B cell (primary cell): ENCODE measurements at regions of chr7 and their contacts with region 1.

Region 1: DNA sequence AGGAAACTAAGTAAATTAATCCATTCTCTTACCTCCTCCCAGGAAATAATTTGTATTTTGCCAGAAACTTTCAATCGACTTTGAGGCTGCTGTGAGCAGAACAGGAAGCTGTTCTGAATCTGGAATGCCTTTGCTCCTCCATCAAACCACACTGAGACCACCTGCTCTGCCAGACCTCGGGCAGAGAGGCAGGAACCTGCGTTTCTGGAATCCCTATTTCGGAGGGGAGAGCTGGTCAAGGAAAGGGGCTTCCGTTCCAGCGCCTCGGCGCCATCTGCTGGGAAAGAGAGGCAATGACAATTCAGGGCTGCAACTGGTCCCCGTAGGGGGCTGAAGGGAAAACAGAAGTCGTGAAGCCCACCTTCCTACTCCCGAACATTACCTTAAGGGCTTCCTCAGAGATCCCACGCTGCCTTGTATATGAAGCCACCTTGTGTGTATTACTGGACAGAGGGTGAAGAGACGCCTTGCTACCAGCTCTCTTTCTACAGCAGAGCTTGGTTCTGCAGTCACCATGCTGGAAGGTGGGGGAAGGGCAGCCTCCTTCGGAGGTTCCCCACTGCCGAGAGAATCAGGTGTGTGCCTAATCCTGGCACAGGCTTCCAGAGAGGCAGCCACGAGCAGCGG is 31.2 kb downstream of the ZNF467 start:
- DNase-seq: peak; percentile 77
- ATAC-seq: peak; percentile 80
- H3K4me3 ChIP-seq: peak overlapping the region; percentile 21 to 57 (median 44)
- H3K4me3 Mint-ChIP-seq: peak overlapping the region; percentile 89
- H3K27ac ChIP-seq: no peak overlapping the region
- H3K27ac Mint-ChIP-seq: no peak overlapping the region
- H3K4me1 ChIP-seq: peaks cover 9 to 11% of the 10 kb centered on the region in 2 donors
- H3K4me1 Mint-ChIP-seq: peaks cover 10% of the 10 kb centered on the region
- H3K27me3 ChIP-seq: peaks cover 0 to 24% (median 0%) of the 10 kb centered on the region in 4 experiments
- H3K27me3 Mint-ChIP-seq: peaks cover 37% of the 10 kb centered on the region
- CTCF ChIP-seq: peak; percentile 89

Region 2: DNA sequence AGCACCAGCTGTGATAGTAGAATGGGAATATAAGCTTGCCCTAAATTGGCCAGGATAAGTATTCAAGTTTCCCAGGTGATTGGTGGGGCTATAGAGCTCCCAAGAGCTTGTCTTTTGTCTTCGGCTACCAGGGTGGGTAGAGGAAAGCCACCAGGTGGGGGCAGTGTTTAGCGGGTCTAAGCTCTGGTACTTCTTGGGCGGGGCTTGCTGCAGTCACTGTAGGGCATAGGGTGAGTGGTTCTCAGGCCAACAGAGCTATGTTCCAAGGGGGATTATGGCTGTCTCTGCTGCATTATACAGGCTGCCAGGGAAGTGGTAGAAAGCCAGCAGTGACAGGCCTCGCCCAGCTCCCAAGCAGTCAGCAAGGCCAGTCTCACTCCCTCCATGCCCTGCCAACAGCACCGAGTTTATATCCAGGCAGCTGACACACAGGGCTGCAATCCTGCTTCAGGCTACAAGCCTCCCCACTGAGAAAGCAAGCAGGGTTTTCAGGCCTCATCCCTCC is 79.5 kb before region 1 on chr7:
- CTCF ChIA-PET with region 1: interaction called, 38 read pairs
- POLR2A ChIA-PET with region 1: no interaction called
- intact Hi-C with region 1: no loop called
- DNase-seq: peak; percentile 49
- ATAC-seq: peak; percentile 62
- H3K4me3 ChIP-seq: no peak overlapping the region
- H3K4me3 Mint-ChIP-seq: no peak overlapping the region
- H3K27ac ChIP-seq: no peak overlapping the region
- H3K27ac Mint-ChIP-seq: no peak overlapping the region
- H3K4me1 ChIP-seq: no peaks in the 10 kb centered on the region
- H3K4me1 Mint-ChIP-seq: no peaks in the 10 kb centered on the region
- H3K27me3 ChIP-seq: peaks cover 0 to 13% (median 0%) of the 10 kb centered on the region in 4 experiments
- H3K27me3 Mint-ChIP-seq: peaks cover 69% of the 10 kb centered on the region
- CTCF ChIP-seq: peak; percentile 47

Region 3: DNA sequence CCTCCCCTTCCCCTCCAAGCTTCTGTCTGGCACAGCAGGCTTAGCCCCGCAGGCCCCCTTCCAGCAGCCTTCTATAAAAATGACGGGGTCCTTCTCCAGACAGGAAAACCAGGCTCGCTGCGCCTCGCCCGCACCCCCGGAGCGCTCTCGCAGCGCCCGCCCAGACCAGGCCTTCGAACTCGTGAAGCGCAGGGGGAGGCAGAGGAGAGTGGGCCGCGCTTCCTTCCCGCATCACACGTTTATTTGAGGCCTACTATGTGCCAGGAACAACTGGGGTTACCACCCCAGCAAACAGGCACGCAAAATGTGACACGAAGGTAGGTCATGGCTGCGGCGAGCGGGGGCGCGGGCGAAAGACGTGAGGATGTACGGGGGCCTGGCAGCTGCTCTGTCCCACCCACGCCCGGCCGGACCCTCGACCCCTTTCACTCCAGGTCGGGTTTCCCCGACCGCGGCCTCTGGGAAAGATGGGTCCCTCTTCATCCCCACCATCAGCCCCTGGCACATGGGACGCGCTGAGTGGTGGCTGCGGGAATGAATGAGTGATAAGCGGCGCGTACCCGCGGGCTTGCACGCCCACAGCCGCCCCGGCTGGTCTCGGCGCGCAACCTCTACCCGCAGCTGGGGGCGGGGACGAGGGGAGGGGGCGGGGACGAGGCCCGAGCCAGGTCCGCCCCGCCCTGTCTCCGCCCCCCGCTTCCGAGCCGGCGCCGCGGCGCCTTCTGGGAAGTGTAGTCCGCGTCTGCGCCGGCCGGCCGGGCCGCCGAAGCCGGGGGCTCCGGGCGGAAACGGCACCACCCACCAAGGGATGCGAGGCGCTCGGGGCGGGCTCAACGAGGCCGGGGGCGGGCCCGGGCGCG is 27.9 kb before region 1 on chr7:
- CTCF ChIA-PET with region 1: interaction called, 14 read pairs
- POLR2A ChIA-PET with region 1: no interaction called
- intact Hi-C with region 1: no loop called
- DNase-seq: peak; percentile 94
- ATAC-seq: peak; percentile 93
- H3K4me3 ChIP-seq: peak overlapping the region in 4 of 5 experiments; percentile 62 to 83 (median 68)
- H3K4me3 Mint-ChIP-seq: peak overlapping the region; percentile 87
- H3K27ac ChIP-seq: no peak overlapping the region
- H3K27ac Mint-ChIP-seq: peak overlapping the region; percentile 78
- H3K4me1 ChIP-seq: peaks cover 10 to 21% of the 10 kb centered on the region in 2 donors
- H3K4me1 Mint-ChIP-seq: peaks cover 22% of the 10 kb centered on the region
- H3K27me3 ChIP-seq: no peaks in the 10 kb centered on the region
- H3K27me3 Mint-ChIP-seq: no peaks in the 10 kb centered on the region
- CTCF ChIP-seq: no peak

Region 4: DNA sequence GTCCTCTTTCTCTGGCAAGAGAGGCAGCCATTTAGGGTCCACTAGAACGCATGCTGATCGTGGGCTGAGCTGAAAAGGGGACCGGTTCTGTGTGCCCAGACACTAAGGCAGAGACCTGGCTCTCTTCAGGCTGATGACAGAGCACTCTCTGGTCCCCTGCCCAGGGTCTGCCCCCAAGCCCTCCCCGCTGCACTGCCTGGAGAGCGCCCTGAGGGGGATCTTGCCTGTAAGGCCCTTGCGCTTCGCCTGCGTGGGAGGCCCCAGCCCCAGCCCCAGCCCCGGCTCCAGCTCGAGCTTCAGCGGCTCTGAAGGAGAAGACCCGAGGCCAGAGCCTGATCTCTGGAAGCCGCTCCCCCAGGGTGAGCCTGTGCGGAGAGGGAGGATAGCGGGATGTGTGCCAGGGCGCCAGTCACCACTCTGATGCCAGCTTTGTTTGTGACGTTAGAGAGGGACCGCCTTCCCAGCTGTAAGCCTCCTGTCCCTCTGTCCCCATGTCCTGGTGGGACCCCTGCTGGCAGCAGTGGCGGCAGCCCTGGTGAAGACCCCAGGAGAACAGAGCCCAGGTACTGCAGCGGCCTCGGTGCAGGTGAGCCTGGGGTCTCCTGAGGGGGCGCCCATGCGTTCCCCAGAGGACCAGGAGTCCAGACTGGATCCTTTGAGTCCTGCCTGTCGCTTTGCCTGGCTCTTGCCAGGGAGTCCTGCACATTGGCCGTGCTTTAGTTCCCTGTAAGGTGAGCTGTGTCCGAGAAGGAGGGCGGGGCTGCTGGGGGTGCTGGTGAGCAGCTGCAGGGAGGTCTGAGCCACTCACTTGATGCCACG is 12.0 kb before region 1 on chr7:
- CTCF ChIA-PET with region 1: interaction called, 29 read pairs
- POLR2A ChIA-PET with region 1: no interaction called
- intact Hi-C with region 1: no loop called
- DNase-seq: no peak
- ATAC-seq: no peak
- H3K4me3 ChIP-seq: no peak overlapping the region
- H3K4me3 Mint-ChIP-seq: no peak overlapping the region
- H3K27ac ChIP-seq: no peak overlapping the region
- H3K27ac Mint-ChIP-seq: no peak overlapping the region
- H3K4me1 ChIP-seq: peaks cover 9% of the 10 kb centered on the region in 2 donors
- H3K4me1 Mint-ChIP-seq: peaks cover 11% of the 10 kb centered on the region
- H3K27me3 ChIP-seq: no peaks in the 10 kb centered on the region
- H3K27me3 Mint-ChIP-seq: no peaks in the 10 kb centered on the region
- CTCF ChIP-seq: no peak

Region 5: GRCh38 chr7:149783386-149784250 is 41.4 kb after region 1 on chr7:
- CTCF ChIA-PET with region 1: no interaction called
- POLR2A ChIA-PET with region 1: no interaction called
- intact Hi-C with region 1: no loop called
- DNase-seq: no peak
- ATAC-seq: no peak
- H3K4me3 ChIP-seq: no peak overlapping the region
- H3K4me3 Mint-ChIP-seq: no peak overlapping the region
- H3K27ac ChIP-seq: no peak overlapping the region
- H3K27ac Mint-ChIP-seq: no peak overlapping the region
- H3K4me1 ChIP-seq: no peaks in the 10 kb centered on the region
- H3K4me1 Mint-ChIP-seq: peaks cover 3% of the 10 kb centered on the region
- H3K27me3 ChIP-seq: peaks cover 0 to 5% (median 0%) of the 10 kb centered on the region in 4 experiments
- H3K27me3 Mint-ChIP-seq: peaks cover 4% of the 10 kb centered on the region
- CTCF ChIP-seq: no peak

Region 6: DNA sequence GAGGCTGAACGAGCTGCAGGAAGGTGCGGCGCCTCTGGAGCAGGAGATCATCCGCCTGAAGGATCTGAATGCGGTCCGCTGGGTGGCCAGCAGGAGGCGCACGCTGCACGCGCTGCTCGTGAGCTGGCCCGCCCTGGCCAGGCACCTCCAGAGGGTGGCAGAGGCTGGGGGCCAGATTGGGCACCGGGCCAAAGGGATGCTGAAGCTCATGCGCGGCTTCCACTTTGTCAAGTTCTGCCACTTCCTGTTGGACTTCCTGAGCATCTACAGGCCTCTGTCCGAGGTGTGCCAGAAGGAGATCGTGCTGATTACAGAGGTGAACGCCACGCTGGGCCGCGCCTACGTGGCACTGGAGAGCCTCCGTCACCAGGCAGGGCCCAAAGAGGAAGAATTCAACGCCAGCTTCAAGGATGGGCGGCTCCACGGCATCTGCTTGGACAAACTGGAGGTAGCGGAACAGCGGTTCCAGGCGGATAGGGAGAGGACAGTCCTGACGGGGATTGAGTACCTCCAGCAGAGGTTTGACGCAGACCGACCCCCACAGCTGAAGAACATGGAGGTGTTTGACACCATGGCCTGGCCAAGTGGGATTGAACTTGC is 119.4 kb after region 1 on chr7:
- CTCF ChIA-PET with region 1: no interaction called
- POLR2A ChIA-PET with region 1: no interaction called
- intact Hi-C with region 1: no loop called
- DNase-seq: no peak
- ATAC-seq: no peak
- H3K4me3 ChIP-seq: no peak overlapping the region
- H3K4me3 Mint-ChIP-seq: no peak overlapping the region
- H3K27ac ChIP-seq: no peak overlapping the region
- H3K27ac Mint-ChIP-seq: no peak overlapping the region
- H3K4me1 ChIP-seq: peaks cover 5 to 10% of the 10 kb centered on the region in 2 donors
- H3K4me1 Mint-ChIP-seq: peaks cover 2% of the 10 kb centered on the region
- H3K27me3 ChIP-seq: no peaks in the 10 kb centered on the region
- H3K27me3 Mint-ChIP-seq: no peaks in the 10 kb centered on the region
- CTCF ChIP-seq: no peak